ENCODE measurements at regions of chr3 and their contacts with region 1.

Region 1: GRCh38 chr3:66822186-66823008 is 175.7 kb upstream of the KBTBD8 start:
- DNase-seq: peak; percentile 40 to 72 (median 67)
- ATAC-seq: peak; percentile 64
- H3K4me3 ChIP-seq: no peak overlapping the region
- H3K4me3 Mint-ChIP-seq: no peak overlapping the region
- H3K27ac ChIP-seq: no peak overlapping the region
- H3K27ac Mint-ChIP-seq: no peak overlapping the region
- H3K4me1 ChIP-seq: no peaks in the 10 kb centered on the region
- H3K4me1 Mint-ChIP-seq: no peaks in the 10 kb centered on the region
- H3K27me3 ChIP-seq: no peaks in the 10 kb centered on the region
- H3K27me3 Mint-ChIP-seq: peaks cover 8% of the 10 kb centered on the region
- CTCF ChIP-seq: peak; percentile 60

Region 2: GRCh38 chr3:66248641-66249040 is 573.8 kb before region 1 on chr3:
- CTCF ChIA-PET with region 1: interaction called, 158 read pairs
- POLR2A ChIA-PET with region 1: interaction called, 4 read pairs
- intact Hi-C with region 1: no loop called
- DNase-seq: no peak
- ATAC-seq: no peak
- H3K4me3 ChIP-seq: no peak overlapping the region
- H3K4me3 Mint-ChIP-seq: no peak overlapping the region
- H3K27ac ChIP-seq: no peak overlapping the region
- H3K27ac Mint-ChIP-seq: no peak overlapping the region
- H3K4me1 ChIP-seq: no peaks in the 10 kb centered on the region
- H3K4me1 Mint-ChIP-seq: no peaks in the 10 kb centered on the region
- H3K27me3 ChIP-seq: no peaks in the 10 kb centered on the region
- H3K27me3 Mint-ChIP-seq: no peaks in the 10 kb centered on the region
- CTCF ChIP-seq: no peak

Region 3: GRCh38 chr3:66270701-66271100 is 551.7 kb before region 1 on chr3:
- CTCF ChIA-PET with region 1: interaction called, 11 read pairs
- POLR2A ChIA-PET with region 1: no interaction called
- intact Hi-C with region 1: no loop called
- DNase-seq: no peak
- ATAC-seq: no peak
- H3K4me3 ChIP-seq: no peak overlapping the region
- H3K4me3 Mint-ChIP-seq: no peak overlapping the region
- H3K27ac ChIP-seq: no peak overlapping the region
- H3K27ac Mint-ChIP-seq: no peak overlapping the region
- H3K4me1 ChIP-seq: no peaks in the 10 kb centered on the region
- H3K4me1 Mint-ChIP-seq: peaks cover 3% of the 10 kb centered on the region
- H3K27me3 ChIP-seq: no peaks in the 10 kb centered on the region
- H3K27me3 Mint-ChIP-seq: no peaks in the 10 kb centered on the region
- CTCF ChIP-seq: no peak

Measured in CD8-positive, alpha-beta T cell (primary cell).